ENCODE measurements at regions of chr9 and their contacts with region 1.

Region 1: DNA sequence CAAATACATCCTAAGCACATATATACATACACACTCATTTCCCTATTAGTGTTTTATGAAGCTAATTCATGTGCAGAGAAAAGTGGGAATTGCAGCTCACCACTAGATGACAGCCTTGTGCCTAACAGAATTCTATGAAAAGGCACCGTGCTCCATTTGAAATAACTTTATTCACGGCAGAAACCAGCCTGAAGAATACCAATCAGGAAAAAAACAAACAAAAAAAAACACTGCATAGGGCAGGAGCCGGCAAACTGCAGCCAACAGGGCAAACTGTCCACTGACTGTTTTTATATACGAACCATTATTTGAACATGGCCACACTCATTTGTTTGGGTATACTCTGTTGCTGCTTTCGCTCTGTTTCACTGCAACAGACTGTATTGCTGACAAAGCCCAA is 33.6 kb downstream of the ERMP1 start:
- DNase-seq: peak in 2 of 9 experiments; percentile 29 to 46
- ATAC-seq: no peak
- H3K4me3 ChIP-seq: no peak overlapping the region
- H3K4me3 Mint-ChIP-seq: no peak overlapping the region
- H3K27ac ChIP-seq: no peak overlapping the region
- H3K27ac Mint-ChIP-seq: no peak overlapping the region
- H3K4me1 ChIP-seq: peaks cover under 1% of the 10 kb centered on the region
- H3K4me1 Mint-ChIP-seq: peaks cover 28% of the 10 kb centered on the region
- H3K27me3 ChIP-seq: no peaks in the 10 kb centered on the region
- H3K27me3 Mint-ChIP-seq: no peaks in the 10 kb centered on the region
- CTCF ChIP-seq: no peak

Region 2: DNA sequence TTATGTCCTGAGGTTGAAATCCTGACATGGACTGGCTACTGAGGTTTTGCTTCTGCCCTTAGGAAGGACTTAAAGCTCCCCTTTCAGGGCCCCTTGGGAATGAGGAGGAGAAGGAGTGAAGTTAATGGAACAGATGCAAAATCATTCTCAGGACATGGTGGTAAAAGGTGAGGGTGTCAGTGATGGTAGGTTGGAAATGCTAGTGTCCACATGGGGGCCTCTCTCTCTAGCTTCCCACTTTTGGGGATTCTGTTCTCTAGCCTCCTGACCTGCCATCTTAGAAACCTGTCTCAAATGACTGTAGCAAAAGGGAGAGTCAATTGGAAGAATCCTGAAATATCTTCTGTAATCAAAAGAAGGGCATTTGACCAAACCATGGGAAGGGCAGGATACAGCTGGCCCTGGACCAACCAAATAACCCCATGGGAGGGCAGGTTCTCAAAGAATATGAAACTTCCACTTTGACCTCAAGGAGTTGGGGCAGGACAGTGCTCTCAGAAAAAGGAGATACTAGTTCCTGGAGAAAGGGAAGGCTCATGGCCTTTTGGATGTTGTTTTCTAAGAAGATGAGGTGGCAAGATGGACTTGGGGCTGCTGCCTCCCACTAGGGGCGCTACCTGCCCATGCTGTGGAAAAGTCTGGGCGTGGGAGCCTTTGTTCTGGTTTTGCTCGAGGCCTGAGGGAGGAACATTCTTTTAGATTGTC is 70.2 kb after region 1 on chr9:
- CTCF ChIA-PET with region 1: no interaction called
- POLR2A ChIA-PET with region 1: no interaction called
- intact Hi-C with region 1: no loop called
- DNase-seq: peak in 2 of 9 experiments; percentile 23 to 30
- ATAC-seq: no peak
- H3K4me3 ChIP-seq: no peak overlapping the region
- H3K4me3 Mint-ChIP-seq: no peak overlapping the region
- H3K27ac ChIP-seq: no peak overlapping the region
- H3K27ac Mint-ChIP-seq: no peak overlapping the region
- H3K4me1 ChIP-seq: no peaks in the 10 kb centered on the region
- H3K4me1 Mint-ChIP-seq: peaks cover 13% of the 10 kb centered on the region
- H3K27me3 ChIP-seq: no peaks in the 10 kb centered on the region
- H3K27me3 Mint-ChIP-seq: no peaks in the 10 kb centered on the region
- CTCF ChIP-seq: no peak

Region 3: DNA sequence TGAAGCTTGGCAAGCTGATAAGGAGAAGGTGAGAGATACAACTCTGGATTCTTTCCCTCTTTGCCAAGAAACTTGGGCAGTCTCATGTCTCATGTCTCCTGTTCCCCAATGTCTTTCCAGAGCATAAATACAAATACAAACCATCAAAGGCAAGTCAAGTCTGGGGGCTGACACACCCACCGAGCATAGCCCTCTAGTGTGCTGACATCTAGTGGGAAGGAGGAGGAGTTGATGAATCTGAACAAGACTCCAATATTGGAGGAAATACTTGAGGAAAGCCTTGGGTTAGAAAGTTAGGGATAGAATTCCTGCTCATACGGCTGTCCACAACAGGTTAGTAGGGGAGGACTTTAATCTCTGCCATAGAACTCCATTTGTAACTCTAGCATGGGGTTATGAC is 100.0 kb after region 1 on chr9:
- CTCF ChIA-PET with region 1: interaction called, 5 read pairs
- POLR2A ChIA-PET with region 1: no interaction called
- intact Hi-C with region 1: loop called in 1 of 2 experiments (anchors 2 kb)
- DNase-seq: peak in 2 of 9 experiments; percentile 22 to 32
- ATAC-seq: no peak
- H3K4me3 ChIP-seq: no peak overlapping the region
- H3K4me3 Mint-ChIP-seq: no peak overlapping the region
- H3K27ac ChIP-seq: no peak overlapping the region
- H3K27ac Mint-ChIP-seq: no peak overlapping the region
- H3K4me1 ChIP-seq: no peaks in the 10 kb centered on the region
- H3K4me1 Mint-ChIP-seq: no peaks in the 10 kb centered on the region
- H3K27me3 ChIP-seq: no peaks in the 10 kb centered on the region
- H3K27me3 Mint-ChIP-seq: no peaks in the 10 kb centered on the region
- CTCF ChIP-seq: no peak

Region 4: DNA sequence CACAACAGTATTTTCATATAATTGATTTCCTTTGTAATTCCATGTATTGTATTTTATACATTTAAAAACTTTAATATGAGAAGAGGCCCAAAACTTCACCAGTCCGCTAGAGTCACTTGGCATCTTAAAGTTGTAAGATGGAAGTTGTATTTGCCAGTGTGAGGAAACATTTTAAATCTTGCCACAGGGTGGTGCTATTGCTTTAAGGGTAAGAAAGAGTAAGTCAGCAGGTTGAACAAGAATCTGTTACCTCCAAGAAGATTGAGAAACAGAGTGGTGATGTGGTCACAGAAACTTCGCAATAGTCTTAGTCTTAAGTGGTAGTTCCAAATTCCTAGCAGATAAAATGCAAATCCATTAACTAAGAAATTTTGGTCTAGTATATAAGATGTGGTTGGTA is 255.9 kb after region 1 on chr9:
- CTCF ChIA-PET with region 1: interaction called, 4 read pairs
- POLR2A ChIA-PET with region 1: no interaction called
- intact Hi-C with region 1: loop called in 1 of 2 experiments (anchors 1 kb)
- DNase-seq: peak in 4 of 9 experiments; percentile 32 to 80 (median 59)
- ATAC-seq: peak; percentile 69
- H3K4me3 ChIP-seq: no peak overlapping the region
- H3K4me3 Mint-ChIP-seq: no peak overlapping the region
- H3K27ac ChIP-seq: no peak overlapping the region
- H3K27ac Mint-ChIP-seq: no peak overlapping the region
- H3K4me1 ChIP-seq: no peaks in the 10 kb centered on the region
- H3K4me1 Mint-ChIP-seq: peaks cover 3% of the 10 kb centered on the region
- H3K27me3 ChIP-seq: no peaks in the 10 kb centered on the region
- H3K27me3 Mint-ChIP-seq: peaks cover 5% of the 10 kb centered on the region
- CTCF ChIP-seq: peak; percentile 40

Region 5: DNA sequence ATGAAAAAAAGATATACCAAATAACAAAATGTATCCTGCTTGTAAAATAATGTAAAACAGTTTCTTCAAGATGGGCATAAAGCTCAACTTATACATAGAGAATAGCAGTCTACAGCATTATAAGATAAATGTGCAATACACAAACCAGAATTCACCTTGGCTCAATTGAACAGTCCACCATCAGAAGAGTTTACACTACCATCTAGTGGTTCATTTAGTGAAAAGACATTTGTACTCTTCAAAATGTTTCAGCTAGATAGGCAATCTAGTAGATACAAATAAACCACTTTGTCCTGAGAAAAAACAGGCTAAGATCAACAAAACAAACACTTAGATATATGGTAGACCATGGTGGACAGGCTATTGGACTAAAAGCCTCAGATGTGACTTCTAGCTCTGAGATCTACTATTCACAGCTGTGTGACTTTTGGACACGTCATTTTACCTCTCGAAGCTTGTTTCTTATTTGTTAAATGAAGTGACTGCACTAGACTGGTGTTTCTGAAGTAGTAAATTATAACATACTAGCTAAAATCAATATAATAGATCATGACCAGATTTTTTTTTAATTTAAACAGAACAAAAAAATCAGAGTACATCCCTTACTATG is 506.7 kb after region 1 on chr9:
- CTCF ChIA-PET with region 1: no interaction called
- POLR2A ChIA-PET with region 1: no interaction called
- intact Hi-C with region 1: loop called in 1 of 2 experiments (anchors 10 kb)
- DNase-seq: peak in 2 of 9 experiments; percentile 29 to 38
- ATAC-seq: no peak
- H3K4me3 ChIP-seq: no peak overlapping the region
- H3K4me3 Mint-ChIP-seq: no peak overlapping the region
- H3K27ac ChIP-seq: no peak overlapping the region
- H3K27ac Mint-ChIP-seq: no peak overlapping the region
- H3K4me1 ChIP-seq: no peaks in the 10 kb centered on the region
- H3K4me1 Mint-ChIP-seq: no peaks in the 10 kb centered on the region
- H3K27me3 ChIP-seq: no peaks in the 10 kb centered on the region
- H3K27me3 Mint-ChIP-seq: peaks cover 14% of the 10 kb centered on the region
- CTCF ChIP-seq: no peak